GM10248 (cell line): ENCODE measurements at regions of chr3 and their contacts with region 1.

Region 1: GRCh38 chr3:113495035-113495434 is 19.9 kb downstream of the SPICE1 start:
- DNase-seq: peak; percentile 35
- CTCF ChIP-seq: peak; percentile 58

Region 2: DNA sequence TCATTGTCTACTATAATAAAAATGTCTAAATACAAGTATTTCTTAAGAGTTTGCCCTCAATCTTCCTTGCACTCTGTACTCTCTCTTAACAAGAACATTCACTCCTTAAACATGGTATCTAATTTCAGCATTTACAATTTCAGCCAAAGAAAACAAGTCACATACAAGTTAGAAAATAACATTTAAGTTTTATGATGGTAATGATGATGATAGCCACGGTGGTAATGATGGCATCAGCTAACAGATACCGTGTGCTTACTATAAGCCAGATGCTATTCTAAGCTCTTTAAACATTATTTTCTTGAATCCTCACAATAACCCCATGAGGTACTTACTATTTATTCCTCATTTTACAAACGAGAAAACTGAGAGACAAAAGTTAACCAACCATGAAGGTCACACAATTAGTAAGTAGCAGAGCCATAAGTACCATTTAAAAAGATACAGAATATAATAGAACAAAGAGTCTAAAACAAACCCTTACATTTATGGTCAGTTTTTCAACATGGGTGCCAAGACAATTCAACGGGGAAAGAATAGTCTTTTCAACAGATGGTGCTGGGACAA is 12.5 kb after region 1 on chr3:
- CTCF ChIA-PET with region 1: interaction called, 37 read pairs
- POLR2A ChIA-PET with region 1: no interaction called
- DNase-seq: no peak
- CTCF ChIP-seq: no peak

Region 3: DNA sequence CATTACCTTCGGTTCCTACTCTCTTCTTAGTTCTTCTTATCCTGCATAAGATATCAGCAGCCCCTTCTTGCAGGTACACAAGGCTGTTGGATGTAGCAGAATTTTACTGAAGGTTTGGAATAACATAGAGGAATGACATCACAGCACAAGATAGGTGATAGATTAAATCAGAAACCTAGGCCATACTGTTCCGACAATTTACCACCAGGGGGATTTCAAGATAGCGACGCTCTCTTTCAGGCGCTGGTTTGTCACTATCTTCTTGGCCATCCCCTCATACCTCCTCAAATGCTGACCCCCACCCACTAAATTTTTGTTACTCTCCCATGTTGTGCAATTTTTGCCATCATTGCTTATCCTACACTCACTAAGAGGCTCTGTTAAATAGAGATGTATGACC is 40.9 kb after region 1 on chr3:
- CTCF ChIA-PET with region 1: interaction called, 11 read pairs
- POLR2A ChIA-PET with region 1: no interaction called
- DNase-seq: no peak
- CTCF ChIP-seq: no peak

Region 4: DNA sequence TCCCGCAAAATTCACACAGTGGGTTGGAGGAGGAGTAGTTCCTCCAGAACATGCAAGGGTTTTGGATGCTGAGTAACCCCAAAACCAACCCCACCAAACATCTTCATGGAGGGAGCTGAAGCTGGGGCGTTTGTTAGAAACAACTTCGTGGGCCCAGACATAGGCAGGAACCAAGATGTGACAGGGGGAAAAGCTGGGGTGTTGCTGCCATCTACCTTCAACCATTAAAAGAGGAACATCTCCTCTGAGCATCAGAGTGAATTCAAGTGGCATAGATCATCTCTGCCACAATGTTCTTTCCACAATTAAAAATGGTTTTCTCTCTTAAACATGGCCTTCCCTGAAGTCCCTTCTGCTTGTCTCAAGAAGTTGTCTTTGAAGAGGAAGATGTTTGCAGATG is 57.8 kb after region 1 on chr3:
- CTCF ChIA-PET with region 1: interaction called, 59 read pairs
- POLR2A ChIA-PET with region 1: no interaction called
- DNase-seq: peak; percentile 33
- CTCF ChIP-seq: peak; percentile 36

Region 5: DNA sequence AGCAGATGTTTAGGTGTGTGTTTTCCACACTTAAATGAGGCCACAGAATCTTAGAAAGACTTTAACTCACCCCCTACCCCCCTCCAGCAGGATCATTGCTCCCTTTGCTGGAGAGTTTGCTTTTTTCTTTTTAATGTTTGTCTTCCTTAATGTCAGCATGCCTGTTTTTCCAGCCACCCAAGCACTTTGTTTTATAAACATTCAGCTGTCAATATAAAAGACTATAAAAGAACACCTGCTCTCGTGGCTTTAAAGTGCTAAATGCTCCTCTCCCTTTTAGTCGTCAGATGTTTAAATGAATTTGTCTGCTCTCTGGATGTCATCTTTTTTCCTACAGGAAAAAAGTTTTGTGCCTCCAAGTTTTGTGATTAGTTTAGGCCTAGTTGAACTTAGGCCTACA is 99.0 kb after region 1 on chr3:
- CTCF ChIA-PET with region 1: interaction called, 12 read pairs
- POLR2A ChIA-PET with region 1: no interaction called
- DNase-seq: no peak
- CTCF ChIP-seq: no peak